Testis (tissue), 5 donors: ENCODE measurements at regions of chr5 and their contacts with region 1.

Region 1: GRCh38 chr5:40694433-40694832 is 14.7 kb downstream of the PTGER4 start:
- DNase-seq: no peak
- H3K4me3 ChIP-seq: no peak overlapping the region
- H3K27ac ChIP-seq: no peak overlapping the region
- H3K4me1 ChIP-seq: no peaks in the 10 kb centered on the region
- H3K27me3 ChIP-seq: no peaks in the 10 kb centered on the region
- CTCF ChIP-seq: no peak
- POLR2A ChIP-seq: no peak

Region 2: DNA sequence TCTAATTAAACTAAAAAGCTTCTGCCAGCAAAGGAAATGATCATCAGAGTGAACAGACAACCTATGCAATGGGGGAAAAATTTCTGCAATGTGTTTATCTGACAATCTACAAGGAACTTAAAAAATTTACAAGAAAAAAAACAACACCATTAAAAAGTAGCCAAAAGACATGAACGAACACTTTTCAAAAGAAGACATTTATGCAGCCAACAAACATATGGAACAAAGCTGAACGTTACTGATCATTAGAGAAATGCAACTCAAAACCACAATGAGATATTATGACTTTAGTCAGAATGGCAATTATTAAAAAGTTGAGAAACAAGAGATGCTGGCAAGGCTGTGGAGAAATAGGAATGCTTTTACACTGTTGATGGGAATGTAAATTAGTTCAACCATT is 739.3 kb before region 1 on chr5:
- intact Hi-C with region 1: loop called (anchors 10 kb)
- DNase-seq: no peak
- H3K4me3 ChIP-seq: no peak overlapping the region
- H3K27ac ChIP-seq: no peak overlapping the region
- H3K4me1 ChIP-seq: no peaks in the 10 kb centered on the region
- H3K27me3 ChIP-seq: no peaks in the 10 kb centered on the region
- CTCF ChIP-seq: no peak
- POLR2A ChIP-seq: no peak